Endothelial cell of umbilical vein (primary cell): ENCODE measurements at regions of chr19 and their contacts with region 1.

Region 1: GRCh38 chr19:38849860-38850435 is at the start of gene HNRNPL:
- DNase-seq: no peak
- H3K4me3 ChIP-seq: peak within 1 kb of the TSS; percentile 58 to 84 (median 78)
- H3K27ac ChIP-seq: peak within 1 kb of the TSS; percentile 86
- H3K4me1 ChIP-seq: peaks cover 34% of the 10 kb centered on the region
- H3K27me3 ChIP-seq: no peaks in the 10 kb centered on the region
- CTCF ChIP-seq: peak; percentile 28 to 70
- POLR2A ChIP-seq: peak; percentile 78
- total RNA-seq, gene HNRNPL: 427 and 451 TPM in 2 replicates

Region 2: GRCh38 chr19:38769635-38770211 is 80.2 kb before region 1 on chr19:
- CTCF ChIA-PET with region 1: interaction called, 6 read pairs
- POLR2A ChIA-PET with region 1: interaction called, 5 read pairs
- dilution Hi-C with region 1: no loop called
- intact Hi-C with region 1: loop called (anchors 2 kb)
- DNase-seq: peak; percentile 70
- H3K4me3 ChIP-seq: peak overlapping the region in 1 of 3 experiments; percentile 18
- H3K27ac ChIP-seq: no peak overlapping the region
- H3K4me1 ChIP-seq: peaks cover 4% of the 10 kb centered on the region
- H3K27me3 ChIP-seq: no peaks in the 10 kb centered on the region
- CTCF ChIP-seq: peak; percentile 79 to 84
- POLR2A ChIP-seq: no peak

Region 3: DNA sequence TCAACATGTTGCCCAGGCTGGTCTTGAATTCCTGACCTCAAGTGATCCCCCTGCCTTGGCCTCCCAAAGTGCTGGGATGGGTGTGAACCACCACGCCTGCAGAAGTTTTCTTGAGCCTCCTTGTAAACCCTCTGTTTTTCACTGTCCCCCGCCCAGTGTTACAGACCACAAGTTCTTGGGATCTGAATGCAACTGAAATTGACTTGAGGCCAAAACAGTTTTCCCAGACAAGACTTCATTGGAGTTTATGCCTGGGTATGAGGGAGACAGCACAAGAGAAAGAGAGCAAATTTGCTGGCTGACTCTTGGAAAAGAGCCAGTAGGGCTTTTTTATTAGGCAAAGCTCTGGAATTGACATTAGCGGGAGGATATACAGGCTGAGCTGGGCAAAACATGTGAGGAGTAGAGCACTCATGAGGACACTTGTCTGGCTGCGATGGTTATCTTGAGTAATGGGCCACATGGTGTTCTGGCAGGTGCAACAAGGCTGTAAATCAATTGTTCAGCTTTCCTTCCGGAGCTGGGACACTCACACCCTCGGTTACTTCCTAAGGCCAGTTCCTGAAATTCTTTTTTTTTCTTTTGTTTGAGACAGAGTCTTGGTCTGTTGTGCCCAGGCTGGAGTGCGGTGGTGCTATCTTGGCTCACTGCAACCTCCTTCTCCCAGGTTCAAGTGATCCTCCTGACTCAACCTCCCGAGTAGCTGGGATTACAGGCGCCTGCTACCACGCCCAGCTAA is 12.5 kb after region 1 on chr19:
- CTCF ChIA-PET with region 1: interaction called, 11 read pairs
- POLR2A ChIA-PET with region 1: interaction called, 3 read pairs
- dilution Hi-C with region 1: no loop called
- intact Hi-C with region 1: loop called (anchors 1 kb)
- DNase-seq: peak; percentile 87
- H3K4me3 ChIP-seq: no peak overlapping the region
- H3K27ac ChIP-seq: peak overlapping the region; percentile 35
- H3K4me1 ChIP-seq: peaks cover 22% of the 10 kb centered on the region
- H3K27me3 ChIP-seq: no peaks in the 10 kb centered on the region
- CTCF ChIP-seq: no peak
- POLR2A ChIP-seq: peak; percentile 64

Region 4: GRCh38 chr19:38891771-38892170 is 41.8 kb after region 1 on chr19:
- CTCF ChIA-PET with region 1: interaction called, 19 read pairs
- POLR2A ChIA-PET with region 1: interaction called, 3 read pairs
- dilution Hi-C with region 1: no loop called
- intact Hi-C with region 1: loop called (anchors 1 kb)
- DNase-seq: no peak
- H3K4me3 ChIP-seq: no peak overlapping the region
- H3K27ac ChIP-seq: no peak overlapping the region
- H3K4me1 ChIP-seq: no peaks in the 10 kb centered on the region
- H3K27me3 ChIP-seq: no peaks in the 10 kb centered on the region
- CTCF ChIP-seq: no peak
- POLR2A ChIP-seq: no peak

Region 5: DNA sequence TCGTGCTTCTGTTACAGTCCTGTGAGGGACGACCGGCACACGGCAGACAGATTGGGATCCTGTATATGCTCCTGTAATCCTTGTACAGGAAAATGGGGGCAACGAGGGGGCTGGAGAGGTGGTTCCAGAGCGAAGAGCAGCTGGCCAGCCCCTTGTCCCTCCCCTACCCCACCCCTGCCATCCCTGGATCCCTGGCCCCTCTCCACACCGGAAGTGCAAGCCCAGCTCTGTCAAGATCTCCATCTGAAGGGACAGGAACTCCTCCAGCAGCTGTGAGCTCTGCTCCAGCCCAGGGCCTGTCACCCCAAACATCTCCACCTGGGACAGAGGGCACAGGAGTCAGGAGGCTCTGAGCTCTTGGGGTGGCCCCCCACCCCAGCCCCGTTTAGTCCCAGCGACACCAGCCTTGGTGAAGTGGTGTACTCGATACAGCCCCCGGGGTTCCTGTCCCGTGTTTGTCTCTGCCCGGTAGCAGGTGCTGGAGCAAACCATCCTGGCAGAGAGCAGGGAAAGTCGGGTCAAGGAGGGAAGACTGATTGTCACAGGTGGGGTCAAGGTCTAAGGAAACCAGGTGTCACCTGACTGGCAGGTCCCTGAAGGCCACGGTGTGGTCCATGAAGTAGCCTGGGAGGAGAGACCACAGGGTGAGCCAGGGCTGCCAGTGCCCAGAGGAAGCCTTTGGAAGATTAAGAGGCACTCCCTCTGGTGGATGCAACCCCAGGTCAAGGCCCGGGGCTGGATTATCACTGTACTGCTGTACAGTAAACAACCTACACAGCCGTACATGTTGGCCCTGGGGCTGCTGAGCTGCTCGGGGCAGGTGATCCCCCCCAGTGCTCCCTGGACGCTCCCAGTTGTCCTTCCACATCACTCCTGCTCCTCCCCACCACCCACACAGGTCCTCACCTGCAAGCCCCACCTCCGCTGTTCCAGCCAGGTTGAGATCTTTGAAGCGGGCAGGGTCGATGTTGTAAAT is 67.9 kb after region 1 on chr19:
- CTCF ChIA-PET with region 1: no interaction called
- POLR2A ChIA-PET with region 1: no interaction called
- dilution Hi-C with region 1: no loop called
- intact Hi-C with region 1: no loop called
- DNase-seq: no peak
- H3K4me3 ChIP-seq: no peak overlapping the region
- H3K27ac ChIP-seq: no peak overlapping the region
- H3K4me1 ChIP-seq: no peaks in the 10 kb centered on the region
- H3K27me3 ChIP-seq: no peaks in the 10 kb centered on the region
- CTCF ChIP-seq: peak in 1 of 2 donors; percentile 14
- POLR2A ChIP-seq: no peak

Region 6: DNA sequence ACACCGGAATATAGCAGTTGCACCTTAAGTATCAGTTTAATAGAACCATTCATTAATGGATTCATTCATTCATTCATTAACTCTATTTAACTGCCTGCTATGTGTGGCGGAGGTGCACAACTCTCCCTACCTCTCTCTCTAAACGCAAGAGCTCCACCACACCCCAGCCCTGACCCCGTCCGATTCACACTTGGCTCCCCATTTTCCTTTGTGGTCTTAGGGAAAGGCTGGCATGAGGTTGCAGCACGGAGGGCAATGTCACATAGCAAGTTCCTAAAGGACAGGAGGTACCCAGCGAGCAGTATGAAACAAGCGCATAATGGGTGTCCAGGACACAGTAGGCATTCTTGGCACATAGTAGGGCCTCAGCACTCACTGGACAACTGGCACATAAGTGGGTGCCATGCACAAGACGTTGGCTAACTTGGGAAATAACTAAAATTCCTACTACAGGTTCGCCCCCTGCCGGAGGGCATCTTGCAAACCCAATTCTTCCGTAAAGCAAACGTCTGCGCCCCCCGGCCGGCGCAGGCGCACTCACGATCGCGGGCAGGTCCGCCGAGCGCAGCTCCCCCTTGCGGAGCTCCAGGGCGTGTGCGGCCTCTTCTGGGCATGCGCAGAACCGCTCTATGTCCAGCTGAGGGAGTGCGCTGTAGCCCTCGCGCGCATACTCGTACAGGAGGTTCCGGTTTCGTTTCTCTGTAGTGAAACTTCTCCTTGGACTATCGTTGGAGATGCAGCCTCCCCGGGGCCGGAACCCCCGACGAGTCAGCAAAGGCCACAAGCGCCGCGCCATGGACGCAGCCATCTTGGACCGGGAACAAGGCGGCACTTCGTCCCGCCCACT is 80.2 kb after region 1 on chr19 and contains the start of gene SARS2:
- CTCF ChIA-PET with region 1: interaction called, 7 read pairs
- POLR2A ChIA-PET with region 1: interaction called, 6 read pairs
- dilution Hi-C with region 1: no loop called
- intact Hi-C with region 1: loop called (anchors 1 kb)
- DNase-seq: peak; percentile 95
- H3K4me3 ChIP-seq: peak within 1 kb of the TSS; percentile 50 to 78 (median 58)
- H3K27ac ChIP-seq: peak within 1 kb of the TSS; percentile 69
- H3K4me1 ChIP-seq: peaks cover 14% of the 10 kb centered on the region
- H3K27me3 ChIP-seq: no peaks in the 10 kb centered on the region
- CTCF ChIP-seq: peak; percentile 99 to 100
- POLR2A ChIP-seq: peak; percentile 85
- total RNA-seq, gene SARS2: 38.5 and 40.3 TPM in 2 replicates